Activated CD4-positive, alpha-beta T cell treated with anti-CD3 and anti-CD28 coated beads, Interleukin-2, amount 10 ng/mL, durations not matched to agents 7 days and 5 days (primary cell): ENCODE measurements at regions of chr2 and their contacts with region 1.

Region 1: DNA sequence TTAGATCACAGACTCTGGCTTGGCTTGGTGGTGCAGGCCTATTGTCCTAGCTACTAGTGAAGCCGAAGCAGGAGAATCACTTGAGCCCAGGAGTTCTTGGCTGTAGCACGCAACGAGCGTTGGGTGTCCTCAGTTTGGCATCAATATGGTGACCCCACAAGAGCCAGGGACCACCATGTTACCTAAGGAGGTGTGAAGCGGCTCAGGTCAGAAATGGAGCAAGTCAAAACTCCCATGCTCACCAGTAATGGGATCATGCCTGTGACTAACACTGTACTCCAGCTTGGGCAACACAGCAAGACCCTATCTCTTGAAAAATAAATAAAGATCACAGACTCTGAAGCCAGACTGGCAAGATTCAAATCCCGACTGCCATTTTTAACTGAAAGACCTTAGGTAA is 1.7 kb upstream of the NOL10 start:
- DNase-seq: no peak
- H3K4me3 Mint-ChIP-seq: no peak overlapping the region
- H3K27ac Mint-ChIP-seq: peak overlapping the region; percentile 11
- H3K4me1 Mint-ChIP-seq: peaks cover 13% of the 10 kb centered on the region
- H3K27me3 Mint-ChIP-seq: no peaks in the 10 kb centered on the region

Region 2: GRCh38 chr2:10457911-10458604 is 233.5 kb before region 1 on chr2:
- CTCF ChIA-PET with region 1: no interaction called
- POLR2A ChIA-PET with region 1: no interaction called
- DNase-seq: no peak
- H3K4me3 Mint-ChIP-seq: no peak overlapping the region
- H3K27ac Mint-ChIP-seq: no peak overlapping the region
- H3K4me1 Mint-ChIP-seq: peaks cover 3% of the 10 kb centered on the region
- H3K27me3 Mint-ChIP-seq: peaks cover 7% of the 10 kb centered on the region

Region 3: GRCh38 chr2:10680214-10680613 is 11.3 kb before region 1 on chr2:
- CTCF ChIA-PET with region 1: interaction called, 6 read pairs
- POLR2A ChIA-PET with region 1: interaction called, 11 read pairs
- DNase-seq: no peak
- H3K4me3 Mint-ChIP-seq: no peak overlapping the region
- H3K27ac Mint-ChIP-seq: no peak overlapping the region
- H3K4me1 Mint-ChIP-seq: peaks cover 15% of the 10 kb centered on the region
- H3K27me3 Mint-ChIP-seq: no peaks in the 10 kb centered on the region

Region 4: GRCh38 chr2:10704034-10704594 is 12.6 kb after region 1 on chr2:
- CTCF ChIA-PET with region 1: no interaction called
- POLR2A ChIA-PET with region 1: no interaction called
- DNase-seq: no peak
- H3K4me3 Mint-ChIP-seq: no peak overlapping the region
- H3K27ac Mint-ChIP-seq: no peak overlapping the region
- H3K4me1 Mint-ChIP-seq: no peaks in the 10 kb centered on the region
- H3K27me3 Mint-ChIP-seq: peaks cover 16% of the 10 kb centered on the region